Heart left ventricle (tissue), 16 donors: ENCODE measurements at regions of chr10 and their contacts with region 1.

Region 1: DNA sequence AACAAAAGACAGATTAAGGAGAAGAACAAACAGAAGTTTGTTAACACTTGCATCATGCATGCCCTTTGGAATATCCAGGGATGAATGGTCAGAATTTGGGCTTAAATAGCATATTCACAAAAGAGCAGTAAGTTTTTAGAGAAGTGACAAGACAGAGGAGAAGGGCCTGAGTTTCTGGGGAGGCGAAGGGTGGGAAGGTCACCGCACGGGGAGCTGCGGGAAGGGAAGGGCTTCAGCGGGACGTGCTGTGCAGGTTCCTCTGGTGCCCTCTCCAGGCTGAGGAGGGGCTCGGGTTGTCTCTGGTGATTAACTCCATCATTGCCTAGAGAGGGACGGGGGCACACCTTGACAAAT is 10.4 kb upstream of the ZNF22 start:
- DNase-seq: peak in 3 of 5 donors; percentile 37 to 64 (median 51)
- ATAC-seq: peak; percentile 23 to 63 (median 43)
- H3K4me3 ChIP-seq: no peak overlapping the region
- H3K27ac ChIP-seq: peak overlapping the region in 11 of 12 donors; percentile 0 to 96 (median 64)
- H3K4me1 ChIP-seq: peaks cover 9 to 82% (median 64%) of the 10 kb centered on the region in 12 donors
- H3K27me3 ChIP-seq: no peaks in the 10 kb centered on the region
- CTCF ChIP-seq: peak in 11 of 12 donors; percentile 22 to 61 (median 44)
- POLR2A ChIP-seq: no peak

Region 2: GRCh38 chr10:43671656-43672531 is 1318.4 kb before region 1 on chr10:
- intact Hi-C with region 1: loop called in 1 of 10 experiments (anchors 10 kb)
- DNase-seq: peak in 3 of 5 donors; percentile 52 to 64 (median 52)
- ATAC-seq: peak; percentile 67 to 76 (median 69)
- H3K4me3 ChIP-seq: no peak overlapping the region
- H3K27ac ChIP-seq: no peak overlapping the region
- H3K4me1 ChIP-seq: peaks cover 0 to 20% (median 8%) of the 10 kb centered on the region in 12 donors
- H3K27me3 ChIP-seq: peaks cover 0 to 17% (median 11%) of the 10 kb centered on the region in 9 donors
- CTCF ChIP-seq: peak; percentile 71 to 89 (median 80)
- POLR2A ChIP-seq: no peak

Region 3: DNA sequence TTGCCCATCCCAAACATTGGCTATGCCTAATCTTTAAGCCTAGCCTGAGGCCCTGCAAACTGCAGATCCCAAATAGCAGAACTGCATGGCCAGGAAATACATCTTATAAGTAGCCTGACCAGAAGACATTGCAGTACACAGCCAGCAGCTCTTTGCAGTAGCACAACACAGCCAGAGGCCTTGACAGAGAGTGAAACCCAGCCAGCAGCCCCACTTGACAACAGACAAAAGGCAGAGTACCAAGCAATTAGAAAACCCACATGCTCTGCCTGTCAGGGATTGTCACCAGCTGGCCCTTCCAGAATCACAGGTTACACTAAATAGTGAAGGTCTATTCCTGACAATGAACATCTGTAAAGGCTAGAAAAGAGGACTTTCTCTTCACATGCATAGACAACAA is 321.9 kb before region 1 on chr10:
- intact Hi-C with region 1: no loop called
- DNase-seq: no peak
- ATAC-seq: no peak
- H3K4me3 ChIP-seq: no peak overlapping the region
- H3K27ac ChIP-seq: no peak overlapping the region
- H3K4me1 ChIP-seq: no peaks in the 10 kb centered on the region
- H3K27me3 ChIP-seq: no peaks in the 10 kb centered on the region
- CTCF ChIP-seq: no peak
- POLR2A ChIP-seq: no peak

Region 4: DNA sequence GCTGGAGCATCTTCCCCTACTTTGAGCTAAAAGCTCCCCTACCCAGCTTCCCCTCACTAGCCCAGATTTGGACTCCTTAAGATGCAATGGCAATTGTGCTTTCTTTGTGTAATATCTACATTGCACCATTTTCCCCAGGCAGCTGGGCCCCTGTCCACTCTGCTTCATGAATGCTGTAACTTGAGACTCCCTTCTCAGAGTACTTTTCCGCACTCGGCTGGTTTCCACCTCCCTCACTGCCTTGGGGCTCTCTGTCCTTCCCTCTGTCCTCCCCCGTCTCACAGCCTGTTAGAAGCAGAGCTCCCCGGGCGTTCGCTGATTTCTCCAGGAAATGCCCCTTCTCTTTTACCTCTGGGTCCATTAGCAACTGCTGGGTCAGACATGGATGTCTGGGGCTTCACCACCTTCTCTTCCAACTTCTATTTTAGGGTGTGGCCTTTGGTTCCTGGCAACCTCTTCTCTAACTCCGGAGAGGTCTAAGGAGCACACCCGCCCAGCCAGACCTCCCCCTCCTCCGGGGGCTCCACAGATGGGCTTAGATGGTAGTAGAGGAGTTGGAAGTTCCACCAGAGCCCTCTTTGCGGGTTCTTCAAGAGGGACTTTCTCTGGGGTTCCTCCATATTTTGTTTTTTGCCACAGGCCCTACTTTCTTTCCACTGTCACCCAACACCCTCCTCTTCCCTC is 82.1 kb before region 1 on chr10:
- intact Hi-C with region 1: no loop called
- DNase-seq: no peak
- ATAC-seq: no peak
- H3K4me3 ChIP-seq: no peak overlapping the region
- H3K27ac ChIP-seq: no peak overlapping the region
- H3K4me1 ChIP-seq: peaks cover 0 to 21% (median 7%) of the 10 kb centered on the region in 12 donors
- H3K27me3 ChIP-seq: no peaks in the 10 kb centered on the region
- CTCF ChIP-seq: no peak
- POLR2A ChIP-seq: no peak

Region 5: GRCh38 chr10:44932517-44933450 is 57.5 kb before region 1 on chr10:
- intact Hi-C with region 1: loop called in 2 of 10 experiments (anchors 1 to 5 kb)
- DNase-seq: peak; percentile 89 to 96 (median 92)
- ATAC-seq: peak; percentile 72 to 92 (median 90)
- H3K4me3 ChIP-seq: no peak overlapping the region
- H3K27ac ChIP-seq: peak overlapping the region in 2 of 12 donors; percentile 21 to 31
- H3K4me1 ChIP-seq: peaks cover 0 to 54% (median 39%) of the 10 kb centered on the region in 12 donors
- H3K27me3 ChIP-seq: no peaks in the 10 kb centered on the region
- CTCF ChIP-seq: peak; percentile 92 to 99 (median 98)
- POLR2A ChIP-seq: no peak

Region 6: DNA sequence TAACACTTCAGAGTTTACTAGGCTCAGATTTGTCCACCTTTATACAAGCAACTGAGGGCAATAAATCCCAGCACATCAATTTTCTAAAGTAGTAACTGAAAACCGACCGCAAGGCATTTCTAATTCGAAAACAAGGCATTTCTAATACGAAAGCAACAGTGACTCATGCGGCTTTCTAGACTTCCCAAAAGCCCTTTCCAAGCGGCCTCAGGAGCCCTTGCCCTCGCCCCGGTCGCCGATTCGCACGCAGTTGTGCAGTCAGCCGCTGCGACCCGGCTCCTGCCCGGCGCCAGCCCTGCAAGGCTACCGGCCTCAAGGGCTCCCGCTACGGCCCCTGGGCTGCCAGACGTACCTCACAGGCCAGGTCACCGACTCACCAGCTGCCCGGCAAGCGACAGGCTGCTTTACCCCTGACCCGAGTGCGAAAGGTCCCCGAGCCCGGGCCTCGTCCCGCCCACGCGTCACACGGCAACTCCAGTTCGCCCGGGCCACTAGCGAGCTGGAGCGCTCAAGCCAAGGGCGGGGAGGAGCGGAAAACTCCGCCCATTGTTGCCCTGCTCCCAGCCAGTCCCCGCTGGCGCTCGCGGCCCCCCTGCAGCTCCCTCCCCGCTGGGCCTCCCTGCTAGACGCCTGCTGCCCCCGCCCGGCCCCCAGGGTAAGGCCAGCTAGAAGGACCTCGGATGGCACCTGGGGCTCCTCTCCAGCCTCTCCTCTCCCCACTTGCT is 1032.9 kb after region 1 on chr10:
- intact Hi-C with region 1: loop called in 1 of 10 experiments (anchors 10 kb)
- DNase-seq: peak; percentile 94 to 97 (median 96)
- ATAC-seq: peak; percentile 92 to 97 (median 96)
- H3K4me3 ChIP-seq: peak overlapping the region; percentile 30 to 82 (median 69)
- H3K27ac ChIP-seq: peak overlapping the region; percentile 49 to 94 (median 88)
- H3K4me1 ChIP-seq: peaks cover 4 to 96% (median 85%) of the 10 kb centered on the region in 12 donors
- H3K27me3 ChIP-seq: no peaks in the 10 kb centered on the region
- CTCF ChIP-seq: peak in 10 of 12 donors; percentile 8 to 57 (median 26)
- POLR2A ChIP-seq: peak; percentile 11 to 67